Posterior vena cava (tissue), 2 donors: ENCODE measurements at regions of chr3 and their contacts with region 1.

Region 1: DNA sequence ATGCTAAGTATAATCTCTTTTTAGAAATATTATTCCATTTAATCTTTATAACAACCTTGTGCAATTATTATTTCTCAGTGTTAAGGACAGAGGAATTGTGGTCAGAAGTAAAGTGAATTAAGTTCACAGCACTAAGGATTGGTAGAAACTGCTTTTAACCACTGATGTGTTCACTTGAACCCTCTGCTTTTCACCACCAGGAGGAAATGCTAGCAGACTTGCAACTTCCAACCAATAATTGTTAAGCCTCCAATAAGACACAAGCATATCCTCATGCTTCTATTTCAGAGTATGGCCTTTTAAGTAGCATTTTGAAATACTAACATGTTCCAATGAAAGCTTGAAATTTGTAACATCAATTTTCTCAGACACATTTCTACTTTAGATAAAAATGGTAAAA is 527.4 kb downstream of the SI start:
- DNase-seq: no peak

Region 2: GRCh38 chr3:163753033-163753432 is 797.8 kb before region 1 on chr3:
- intact Hi-C with region 1: loop called in 1 of 2 experiments (anchors 5 kb)
- DNase-seq: no peak